A673 (cell line): ENCODE measurements at regions of chr3 and their contacts with region 1.

Region 1: DNA sequence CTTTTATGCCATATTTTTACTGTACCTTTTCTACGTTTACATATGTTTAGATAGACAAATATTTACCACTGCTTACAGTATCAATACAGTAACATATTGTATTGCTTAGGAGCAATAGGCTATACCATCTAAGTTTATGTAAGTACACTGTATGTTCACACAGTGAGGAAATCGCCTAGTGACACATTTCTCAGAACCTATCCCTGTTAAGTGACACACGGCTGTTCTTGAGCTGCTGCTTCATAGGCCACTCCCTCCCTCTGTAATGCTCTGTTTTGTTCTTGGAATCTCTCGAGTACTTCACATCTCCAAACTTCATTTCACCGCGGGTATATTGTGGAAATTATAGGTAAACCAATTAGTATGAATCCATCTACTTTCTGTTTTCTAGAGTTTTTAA is 13.4 kb upstream of the SELENOT start:
- DNase-seq: no peak
- H3K4me3 ChIP-seq: no peak overlapping the region
- H3K27ac ChIP-seq: no peak overlapping the region
- H3K4me1 ChIP-seq: no peaks in the 10 kb centered on the region
- H3K27me3 ChIP-seq: no peaks in the 10 kb centered on the region
- CTCF ChIP-seq: no peak

Region 2: GRCh38 chr3:150555859-150556436 is 33.8 kb before region 1 on chr3:
- CTCF ChIA-PET with region 1: no interaction called
- POLR2A ChIA-PET with region 1: interaction called, 12 read pairs
- intact Hi-C with region 1: no loop called
- DNase-seq: no peak
- H3K4me3 ChIP-seq: no peak overlapping the region
- H3K27ac ChIP-seq: no peak overlapping the region
- H3K4me1 ChIP-seq: no peaks in the 10 kb centered on the region
- H3K27me3 ChIP-seq: no peaks in the 10 kb centered on the region
- CTCF ChIP-seq: no peak